MCF 10A (cell line): ENCODE measurements at regions of chr16 and their contacts with region 1.

Region 1: GRCh38 chr16:79849119-79849518 is 248.6 kb upstream of the MAF start:
- DNase-seq: peak; percentile 28
- H3K4me3 Mint-ChIP-seq: no peak overlapping the region
- H3K27ac Mint-ChIP-seq: peak overlapping the region; percentile 23
- H3K4me1 Mint-ChIP-seq: peaks cover 42% of the 10 kb centered on the region
- H3K27me3 Mint-ChIP-seq: no peaks in the 10 kb centered on the region
- CTCF ChIP-seq: no peak

Region 2: DNA sequence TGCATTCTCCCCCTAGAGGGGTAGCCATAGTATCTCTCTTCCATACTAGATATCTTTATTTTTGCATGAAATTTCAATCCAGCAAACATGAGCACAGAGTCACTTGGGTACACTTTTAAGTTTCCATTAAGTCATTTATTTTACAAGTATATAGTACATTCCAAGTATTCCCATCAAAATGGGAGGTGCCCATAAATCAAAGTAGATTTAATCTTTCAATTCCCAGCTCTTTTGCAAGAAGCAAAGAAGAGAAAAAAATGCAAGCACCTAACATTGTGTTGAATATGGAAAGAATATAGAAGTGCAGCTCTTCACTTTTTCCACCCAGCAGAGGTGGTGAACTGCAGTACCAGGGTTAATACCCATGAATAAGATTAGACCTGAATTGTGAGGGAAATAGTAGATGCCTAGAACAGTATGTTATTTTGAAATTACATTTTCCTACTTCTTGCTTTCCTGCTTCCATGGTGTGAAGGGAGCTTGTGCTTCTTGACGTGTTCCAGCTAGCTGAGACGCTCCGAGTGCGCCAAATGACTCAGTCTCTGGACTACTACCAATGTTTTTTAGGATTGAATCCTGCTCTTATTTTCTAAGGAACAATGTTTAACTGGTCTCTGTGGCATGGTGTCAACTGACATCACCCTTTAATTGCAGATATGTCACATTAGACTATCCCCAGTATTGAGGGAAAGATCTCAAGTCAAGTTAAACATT is 97.5 kb before region 1 on chr16:
- CTCF ChIA-PET with region 1: no interaction called
- POLR2A ChIA-PET with region 1: interaction called, 18 read pairs
- intact Hi-C with region 1: no loop called
- DNase-seq: peak; percentile 79
- H3K4me3 Mint-ChIP-seq: peak overlapping the region; percentile 17
- H3K27ac Mint-ChIP-seq: peak overlapping the region; percentile 9
- H3K4me1 Mint-ChIP-seq: peaks cover 39% of the 10 kb centered on the region
- H3K27me3 Mint-ChIP-seq: no peaks in the 10 kb centered on the region
- CTCF ChIP-seq: no peak

Region 3: DNA sequence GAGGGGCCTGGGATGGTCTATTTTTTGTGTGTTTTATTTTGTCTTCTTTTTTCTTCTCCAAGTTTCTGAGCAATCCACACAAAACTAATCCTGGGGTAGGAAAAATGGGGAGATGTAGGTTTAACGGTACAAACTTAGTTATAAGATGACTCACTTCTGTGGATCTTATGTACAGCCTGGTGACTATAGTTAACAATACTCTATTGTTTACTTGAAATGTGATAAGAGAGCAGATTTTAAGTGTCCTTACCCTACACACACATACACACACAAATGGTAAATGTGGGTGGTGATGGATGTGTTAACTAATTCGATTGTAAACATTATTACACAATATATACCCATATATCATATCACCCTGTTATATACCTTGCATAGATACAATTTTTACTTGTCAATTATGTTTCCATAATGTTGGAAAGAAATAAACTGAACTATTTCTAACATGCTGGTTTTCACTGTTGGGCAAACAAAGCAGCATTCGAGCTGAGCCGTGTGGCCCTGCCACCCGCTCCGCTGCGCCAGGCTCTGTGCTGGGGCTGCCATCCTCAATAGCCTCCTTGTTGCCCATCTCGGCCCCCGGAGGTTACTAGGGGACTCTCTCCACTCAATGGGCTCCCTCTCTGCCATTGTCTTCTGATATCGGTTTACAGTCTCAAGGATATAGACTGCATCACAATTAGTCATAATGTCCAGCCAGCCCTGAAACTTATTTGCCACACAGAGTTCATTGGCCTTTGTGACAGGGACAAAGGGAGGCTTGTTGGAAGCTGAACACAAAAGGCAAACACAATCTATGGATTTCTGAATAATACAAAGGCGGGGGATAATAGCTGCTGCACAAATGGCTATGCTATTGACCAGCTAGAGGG is 131.8 kb after region 1 on chr16:
- CTCF ChIA-PET with region 1: no interaction called
- POLR2A ChIA-PET with region 1: no interaction called
- intact Hi-C with region 1: no loop called
- DNase-seq: no peak
- H3K4me3 Mint-ChIP-seq: no peak overlapping the region
- H3K27ac Mint-ChIP-seq: no peak overlapping the region
- H3K4me1 Mint-ChIP-seq: no peaks in the 10 kb centered on the region
- H3K27me3 Mint-ChIP-seq: peaks cover 14% of the 10 kb centered on the region
- CTCF ChIP-seq: no peak